AG04450 (cell line): ENCODE measurements at regions of chr6 and their contacts with region 1.

Region 1: DNA sequence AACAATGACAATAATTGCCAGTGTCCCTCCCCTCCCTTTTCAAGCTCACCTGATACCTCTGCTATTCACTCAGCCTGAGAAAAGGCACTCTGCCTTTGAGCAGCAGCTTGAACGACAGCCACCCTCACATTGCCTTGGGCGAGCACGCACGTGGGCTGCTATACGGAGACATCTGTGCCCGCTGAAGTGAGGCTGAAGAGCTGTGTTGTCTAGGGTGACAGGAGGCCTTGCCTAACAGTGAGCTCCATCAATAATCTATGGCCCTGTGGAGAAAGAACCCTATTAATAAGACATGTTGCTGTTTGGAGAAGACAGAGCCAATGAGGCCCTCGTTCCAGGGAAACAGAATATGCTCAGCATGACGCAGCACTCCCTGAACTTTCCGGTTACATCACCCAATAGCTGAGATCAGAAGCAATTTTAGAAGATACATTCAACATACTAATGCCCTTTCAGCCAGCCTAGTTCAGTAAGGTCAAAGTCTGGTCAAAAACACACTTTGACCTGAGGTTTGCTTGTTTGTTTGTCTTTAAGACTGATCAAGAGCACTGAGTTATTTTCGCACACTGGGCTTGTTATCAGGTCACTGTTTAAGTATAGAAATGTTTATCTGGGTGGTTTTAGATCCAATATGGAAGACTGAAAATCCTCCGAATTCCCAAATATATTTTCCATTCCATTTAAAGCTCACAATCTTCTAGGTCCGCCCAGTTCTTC is 30.6 kb downstream of the RBM24 start:
- DNase-seq: no peak
- H3K4me3 ChIP-seq: no peak overlapping the region
- H3K27ac ChIP-seq: no peak overlapping the region
- H3K27me3 ChIP-seq: no peaks in the 10 kb centered on the region
- CTCF ChIP-seq: no peak

Region 2: DNA sequence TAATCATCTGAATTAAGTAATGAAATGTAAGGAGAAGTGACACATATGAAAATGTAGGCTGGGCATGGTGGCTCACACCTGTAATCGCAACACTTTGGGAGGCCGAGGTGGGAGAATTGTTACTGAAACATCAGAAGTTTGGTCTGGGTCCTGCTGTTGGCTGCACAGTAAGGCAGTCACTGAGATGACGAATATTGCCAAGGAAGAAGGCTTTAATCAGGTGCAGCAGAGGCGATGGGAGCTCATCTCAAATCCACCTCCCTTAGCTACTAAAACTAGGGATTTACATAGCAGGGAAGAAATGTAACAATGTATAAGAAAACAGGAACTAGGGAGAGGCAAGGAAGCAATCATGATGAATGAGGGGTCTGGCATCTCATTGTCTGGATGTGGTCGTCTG is 19.5 kb after region 1 on chr6:
- CTCF ChIA-PET with region 1: no interaction called
- POLR2A ChIA-PET with region 1: no interaction called
- DNase-seq: no peak
- H3K4me3 ChIP-seq: no peak overlapping the region
- H3K27ac ChIP-seq: no peak overlapping the region
- H3K27me3 ChIP-seq: no peaks in the 10 kb centered on the region
- CTCF ChIP-seq: no peak

Region 3: DNA sequence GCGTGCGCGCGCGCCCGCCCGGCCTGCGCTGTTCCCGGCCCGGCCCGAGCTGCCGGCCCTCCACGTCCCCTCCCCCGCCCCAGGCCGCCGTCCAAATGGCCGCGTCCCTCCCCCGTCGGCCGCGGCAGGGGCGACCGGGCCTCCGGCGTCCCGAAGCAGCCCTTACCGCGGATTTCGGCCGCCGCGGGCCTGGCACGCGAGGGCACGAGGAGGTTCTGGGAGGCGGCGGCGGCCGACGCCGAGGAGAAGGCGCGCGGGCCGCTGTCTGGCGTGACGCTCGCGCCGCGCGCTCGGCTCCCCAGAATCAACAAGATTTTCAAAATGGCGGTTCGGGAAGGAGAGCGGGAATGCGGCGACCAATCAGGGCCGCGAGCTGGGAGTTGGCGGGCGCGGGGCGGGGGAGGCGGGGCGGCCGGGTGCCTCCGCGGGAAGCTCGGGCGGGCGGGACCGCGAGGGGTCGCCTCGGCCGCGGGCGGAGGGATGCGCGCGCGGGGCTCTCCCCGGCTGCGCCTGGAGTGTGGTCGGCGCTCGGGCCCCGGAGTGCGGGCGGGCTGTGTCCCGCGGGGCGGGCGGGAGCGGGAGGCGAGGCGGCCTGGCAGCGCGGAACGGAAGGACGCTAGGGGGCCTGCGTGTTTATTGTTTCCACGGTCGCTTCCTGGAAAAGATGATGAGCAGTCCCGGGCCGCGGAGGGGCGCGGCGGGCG is 952.6 kb after region 1 on chr6 and contains the start of gene DEK:
- CTCF ChIA-PET with region 1: interaction called, 11 read pairs
- POLR2A ChIA-PET with region 1: no interaction called
- DNase-seq: peak; percentile 46
- H3K4me3 ChIP-seq: peak within 1 kb of the TSS; percentile 90
- H3K27ac ChIP-seq: peak within 1 kb of the TSS; percentile 75
- H3K27me3 ChIP-seq: no peaks in the 10 kb centered on the region
- CTCF ChIP-seq: peak; percentile 61
- polyA plus RNA-seq, gene DEK: 39.1 and 68.1 TPM in 2 replicates